PC-9 (cell line): ENCODE measurements at regions of chr2 and their contacts with region 1.

Region 1: GRCh38 chr2:217993817-217994463 is 8.9 kb downstream of the TNS1 start:
- DNase-seq: peak in 1 of 2 experiments; percentile 17
- H3K4me3 ChIP-seq: no peak overlapping the region
- H3K27ac ChIP-seq: no peak overlapping the region
- H3K4me1 ChIP-seq: peaks cover 17% of the 10 kb centered on the region
- H3K27me3 ChIP-seq: no peaks in the 10 kb centered on the region
- CTCF ChIP-seq: peak; percentile 75

Region 2: GRCh38 chr2:217909156-217909820 is 84.7 kb before region 1 on chr2:
- CTCF ChIA-PET with region 1: no interaction called
- POLR2A ChIA-PET with region 1: no interaction called
- intact Hi-C with region 1: no loop called
- DNase-seq: no peak
- H3K4me3 ChIP-seq: no peak overlapping the region
- H3K27ac ChIP-seq: no peak overlapping the region
- H3K4me1 ChIP-seq: no peaks in the 10 kb centered on the region
- H3K27me3 ChIP-seq: peaks cover 29% of the 10 kb centered on the region
- CTCF ChIP-seq: no peak; the same call in 1 of the 2 replicates

Region 3: GRCh38 chr2:218431868-218432267 is 437.9 kb after region 1 on chr2:
- CTCF ChIA-PET with region 1: interaction called, 11 read pairs
- POLR2A ChIA-PET with region 1: no interaction called
- intact Hi-C with region 1: no loop called
- DNase-seq: no peak
- H3K4me3 ChIP-seq: no peak overlapping the region
- H3K27ac ChIP-seq: no peak overlapping the region
- H3K4me1 ChIP-seq: no peaks in the 10 kb centered on the region
- H3K27me3 ChIP-seq: 0 out of 2 replicates have a peak, but pooled peaks cover 5% of the 10 kb centered on the region
- CTCF ChIP-seq: no peak